ENCODE measurements at regions of chr1 and their contacts with region 1.

Region 1: GRCh38 chr1:161225534-161226319 is at the start of gene TOMM40L:
- DNase-seq: peak; percentile 99
- H3K4me3 ChIP-seq: peak within 1 kb of the TSS; percentile 43 to 83 (median 59)
- H3K27ac ChIP-seq: peak within 1 kb of the TSS; percentile 31
- H3K4me1 ChIP-seq: peaks cover 18% of the 10 kb centered on the region
- H3K27me3 ChIP-seq: no peaks in the 10 kb centered on the region
- CTCF ChIP-seq: peak; percentile 55 to 57
- POLR2A ChIP-seq: peak; percentile 36
- total RNA-seq, gene TOMM40L: 18.7 TPM in 2 replicates

Region 2: DNA sequence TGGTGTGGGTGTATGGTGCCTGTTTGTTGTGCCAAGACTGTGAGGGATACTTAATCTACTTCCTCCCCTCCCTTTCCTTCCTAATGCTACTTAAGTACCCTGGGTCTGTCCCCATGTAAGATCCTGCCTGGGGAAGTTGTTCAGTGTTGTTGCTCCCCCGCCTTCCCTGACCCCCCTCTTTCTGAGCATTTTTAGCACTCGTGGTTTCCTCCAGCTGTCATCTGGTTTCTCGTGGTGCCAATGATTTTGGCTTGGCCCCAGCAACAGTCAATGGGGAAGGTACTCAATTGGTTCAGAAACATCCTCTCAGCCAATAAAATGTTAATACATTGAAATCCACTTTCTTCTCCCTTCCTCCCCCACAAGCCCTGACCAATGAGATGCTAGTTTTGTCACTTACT is 40.4 kb before region 1 on chr1:
- CTCF ChIA-PET with region 1: interaction called, 5 read pairs
- POLR2A ChIA-PET with region 1: no interaction called
- dilution Hi-C with region 1: no loop called
- intact Hi-C with region 1: loop called (anchors 2 kb)
- DNase-seq: peak; percentile 99
- H3K4me3 ChIP-seq: no peak overlapping the region
- H3K27ac ChIP-seq: peak overlapping the region; percentile 48
- H3K4me1 ChIP-seq: peaks cover 28% of the 10 kb centered on the region
- H3K27me3 ChIP-seq: no peaks in the 10 kb centered on the region
- CTCF ChIP-seq: no peak
- POLR2A ChIP-seq: peak; percentile 37

Region 3: GRCh38 chr1:161201828-161202725 is 23.6 kb before region 1 on chr1 and contains the start of gene NDUFS2:
- CTCF ChIA-PET with region 1: interaction called, 35 read pairs
- POLR2A ChIA-PET with region 1: interaction called, 15 read pairs
- dilution Hi-C with region 1: no loop called
- intact Hi-C with region 1: loop called (anchors 1 kb)
- DNase-seq: peak; percentile 98
- H3K4me3 ChIP-seq: peak within 1 kb of the TSS; percentile 72 to 96 (median 75)
- H3K27ac ChIP-seq: peak within 1 kb of the TSS; percentile 98
- H3K4me1 ChIP-seq: peaks cover 59% of the 10 kb centered on the region
- H3K27me3 ChIP-seq: no peaks in the 10 kb centered on the region
- CTCF ChIP-seq: peak in 1 of 2 donors; percentile 9
- POLR2A ChIP-seq: peak; percentile 93
- total RNA-seq, gene NDUFS2: 95.1 and 99.7 TPM in 2 replicates

Region 4: DNA sequence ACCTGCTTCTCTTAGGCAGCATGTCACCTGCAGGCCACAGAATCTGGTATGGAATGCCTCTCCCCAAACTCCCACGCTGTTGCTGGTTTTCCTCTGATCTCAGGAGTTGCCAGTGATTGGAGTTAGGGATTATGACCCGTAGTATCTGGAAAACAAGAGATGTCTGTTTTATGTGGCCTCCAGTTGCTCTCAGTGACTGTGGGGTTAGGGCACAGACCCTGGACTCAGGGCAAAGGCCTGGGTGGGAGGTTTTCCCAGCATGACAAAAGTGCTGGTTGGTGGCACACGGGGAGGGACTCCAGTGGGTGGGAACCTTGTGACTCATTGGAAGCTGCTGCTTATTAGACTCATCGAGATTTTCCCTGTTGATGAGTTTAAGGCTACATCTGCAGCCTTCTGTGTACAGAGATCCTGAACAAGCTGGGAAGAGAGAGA is 12.3 kb after region 1 on chr1 and contains the start of gene NR1I3:
- CTCF ChIA-PET with region 1: interaction called, 12 read pairs
- POLR2A ChIA-PET with region 1: no interaction called
- dilution Hi-C with region 1: no loop called
- intact Hi-C with region 1: no loop called
- DNase-seq: no peak
- H3K4me3 ChIP-seq: no peak within 1 kb of the TSS
- H3K27ac ChIP-seq: no peak within 1 kb of the TSS
- H3K4me1 ChIP-seq: no peaks in the 10 kb centered on the region
- H3K27me3 ChIP-seq: peaks cover 3 to 6% of the 10 kb centered on the region in 2 experiments
- CTCF ChIP-seq: no peak
- POLR2A ChIP-seq: no peak
- total RNA-seq, gene NR1I3: not detected in 2 replicates

Region 5: DNA sequence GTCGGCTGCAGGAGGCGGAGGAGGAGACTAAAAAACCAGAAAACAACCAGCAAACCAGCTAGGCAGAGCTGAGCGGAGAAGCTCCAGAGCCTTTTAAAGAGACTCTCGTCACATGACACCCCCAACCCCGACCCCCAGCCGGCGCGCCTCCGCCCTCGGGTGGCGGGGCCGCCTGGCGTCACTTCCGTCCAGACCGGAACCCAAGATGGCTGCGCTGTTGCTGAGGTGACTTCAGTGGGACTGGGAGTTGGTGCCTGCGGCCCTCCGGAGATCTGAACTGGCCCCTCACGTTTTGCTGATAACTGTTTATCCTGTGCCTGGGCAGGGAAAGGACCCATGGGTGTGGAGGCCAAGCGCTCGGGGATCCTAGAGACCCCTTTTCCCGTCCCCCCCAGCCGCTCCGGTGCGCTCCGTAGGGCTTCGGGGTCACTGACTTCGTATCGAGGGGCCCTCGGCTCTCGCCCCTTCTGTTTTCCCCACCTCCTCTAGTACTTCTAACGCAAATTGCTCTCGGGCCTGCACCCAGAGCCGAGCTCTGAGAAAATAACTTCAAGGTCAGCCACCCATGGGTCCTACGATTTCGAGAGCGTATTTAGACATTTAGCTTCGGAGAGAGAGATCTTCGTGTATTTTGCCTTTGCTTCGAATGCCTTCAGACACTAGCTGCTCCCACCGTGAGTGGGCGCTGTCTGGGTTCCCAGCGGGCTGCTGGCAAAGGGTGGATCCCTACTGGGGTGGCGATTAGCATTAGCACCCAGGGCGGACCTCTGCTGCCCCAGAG is 88.7 kb after region 1 on chr1 and contains the start of gene SDHC:
- CTCF ChIA-PET with region 1: interaction called, 3 read pairs
- POLR2A ChIA-PET with region 1: interaction called, 4 read pairs
- dilution Hi-C with region 1: no loop called
- intact Hi-C with region 1: loop called (anchors 1 kb)
- DNase-seq: peak; percentile 92
- H3K4me3 ChIP-seq: peak within 1 kb of the TSS; percentile 45 to 100 (median 80)
- H3K27ac ChIP-seq: peak within 1 kb of the TSS; percentile 93
- H3K4me1 ChIP-seq: peaks cover 9% of the 10 kb centered on the region
- H3K27me3 ChIP-seq: no peaks in the 10 kb centered on the region
- CTCF ChIP-seq: peak; percentile 39 to 64
- POLR2A ChIP-seq: peak; percentile 98
- total RNA-seq, gene SDHC: 136 and 148 TPM in 2 replicates

Region 6: DNA sequence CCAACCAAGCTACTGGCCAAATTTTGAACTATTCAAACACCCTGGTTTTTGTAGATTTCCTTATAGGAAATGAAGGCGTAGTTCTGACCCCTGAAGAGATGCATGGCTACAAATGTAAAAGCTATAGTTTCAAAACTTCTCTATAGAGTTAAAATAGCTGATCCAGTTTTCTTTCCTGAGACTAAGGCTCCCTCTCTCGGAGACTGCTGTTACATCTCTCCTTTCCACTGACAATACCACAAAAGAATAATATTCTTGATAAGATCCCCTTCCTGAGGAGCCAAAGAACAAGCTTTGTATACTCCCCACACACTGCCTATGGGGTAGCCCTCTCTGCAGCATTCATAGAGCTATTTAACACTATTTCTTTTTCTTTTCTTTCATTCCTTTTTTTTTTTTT is 148.6 kb after region 1 on chr1:
- CTCF ChIA-PET with region 1: interaction called, 78 read pairs
- POLR2A ChIA-PET with region 1: no interaction called
- dilution Hi-C with region 1: no loop called
- intact Hi-C with region 1: loop called (anchors 1 kb)
- DNase-seq: peak; percentile 49
- H3K4me3 ChIP-seq: no peak overlapping the region
- H3K27ac ChIP-seq: no peak overlapping the region
- H3K4me1 ChIP-seq: no peaks in the 10 kb centered on the region
- H3K27me3 ChIP-seq: no peaks in the 10 kb centered on the region
- CTCF ChIP-seq: peak; percentile 14 to 48
- POLR2A ChIP-seq: no peak

Measured in endothelial cell of umbilical vein (primary cell).